ENCODE measurements at regions of chr13 and their contacts with region 1.

Region 1: DNA sequence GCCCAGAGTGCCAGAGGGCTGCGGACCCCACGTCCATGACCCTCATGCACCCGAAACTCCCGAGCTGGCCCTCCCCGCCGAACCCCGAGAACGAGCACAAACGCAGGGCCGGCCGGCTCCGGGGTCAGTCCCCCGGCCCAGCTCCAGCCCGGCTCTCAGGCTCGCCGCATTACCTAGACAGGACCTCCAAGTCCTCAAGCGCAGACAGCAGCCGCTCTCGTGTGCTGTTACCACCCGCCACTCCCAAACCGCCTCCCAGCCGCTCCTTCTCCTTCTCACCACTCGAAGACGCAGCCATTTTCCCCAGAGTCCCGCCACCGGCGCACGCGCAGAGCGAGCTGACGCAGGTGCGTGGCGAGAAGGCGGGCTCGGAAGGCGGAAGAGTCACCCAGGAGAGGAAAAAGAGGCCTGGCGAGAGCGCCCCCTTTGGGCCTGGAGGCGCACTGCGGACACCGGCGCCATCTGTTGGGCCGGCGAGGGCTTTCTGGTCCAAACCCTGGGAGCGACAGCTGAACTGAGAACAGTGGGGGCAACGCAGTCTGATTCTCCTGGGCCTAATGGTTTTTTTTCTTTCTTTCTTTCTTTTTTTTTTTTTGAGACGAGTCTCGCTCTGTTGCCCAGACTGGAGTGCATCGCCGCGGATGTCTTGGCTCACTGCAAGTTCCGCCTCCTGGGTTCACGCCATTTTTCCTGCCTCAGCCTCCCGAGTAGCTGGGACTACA is at the start of gene MED4:
- DNase-seq: peak; percentile 94
- H3K4me3 Mint-ChIP-seq: peak within 1 kb of the TSS; percentile 83
- H3K27ac Mint-ChIP-seq: peak within 1 kb of the TSS; percentile 96
- H3K4me1 Mint-ChIP-seq: peaks cover 13% of the 10 kb centered on the region
- H3K27me3 Mint-ChIP-seq: no peaks in the 10 kb centered on the region
- CTCF ChIP-seq: peak; percentile 99
- total RNA-seq, gene MED4: 45.2 and 56.5 TPM in 2 replicates

Region 2: DNA sequence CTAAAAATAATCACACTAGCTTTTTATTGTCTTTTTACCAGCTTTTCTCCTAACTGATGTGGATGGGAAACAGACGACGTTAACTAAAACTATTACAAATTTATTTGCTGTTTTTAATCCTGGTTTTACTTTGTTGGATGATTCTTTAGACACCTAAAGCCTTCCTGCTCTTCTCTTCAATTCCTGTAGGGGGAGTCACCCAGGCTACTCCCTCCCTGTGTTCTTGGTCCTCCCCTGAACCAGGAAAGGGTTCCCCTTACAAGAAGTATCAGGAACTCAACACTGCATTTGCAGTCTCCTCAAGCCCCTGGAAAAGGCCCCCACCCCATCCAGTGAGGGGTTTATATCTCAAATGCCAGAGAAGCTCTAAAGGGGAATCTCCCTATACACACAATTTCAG is 300.0 kb before region 1 on chr13:
- CTCF ChIA-PET with region 1: interaction called, 7 read pairs
- POLR2A ChIA-PET with region 1: interaction called, 3 read pairs
- intact Hi-C with region 1: loop called (anchors 2 kb)
- DNase-seq: peak; percentile 42
- H3K4me3 Mint-ChIP-seq: no peak overlapping the region
- H3K27ac Mint-ChIP-seq: no peak overlapping the region
- H3K4me1 Mint-ChIP-seq: no peaks in the 10 kb centered on the region
- H3K27me3 Mint-ChIP-seq: no peaks in the 10 kb centered on the region
- CTCF ChIP-seq: peak; percentile 38

Region 3: GRCh38 chr13:48110931-48111721 is 16.2 kb after region 1 on chr13:
- CTCF ChIA-PET with region 1: interaction called, 13 read pairs
- POLR2A ChIA-PET with region 1: no interaction called
- intact Hi-C with region 1: no loop called
- DNase-seq: no peak
- H3K4me3 Mint-ChIP-seq: no peak overlapping the region
- H3K27ac Mint-ChIP-seq: no peak overlapping the region
- H3K4me1 Mint-ChIP-seq: peaks cover 10% of the 10 kb centered on the region
- H3K27me3 Mint-ChIP-seq: no peaks in the 10 kb centered on the region
- CTCF ChIP-seq: no peak

Region 4: DNA sequence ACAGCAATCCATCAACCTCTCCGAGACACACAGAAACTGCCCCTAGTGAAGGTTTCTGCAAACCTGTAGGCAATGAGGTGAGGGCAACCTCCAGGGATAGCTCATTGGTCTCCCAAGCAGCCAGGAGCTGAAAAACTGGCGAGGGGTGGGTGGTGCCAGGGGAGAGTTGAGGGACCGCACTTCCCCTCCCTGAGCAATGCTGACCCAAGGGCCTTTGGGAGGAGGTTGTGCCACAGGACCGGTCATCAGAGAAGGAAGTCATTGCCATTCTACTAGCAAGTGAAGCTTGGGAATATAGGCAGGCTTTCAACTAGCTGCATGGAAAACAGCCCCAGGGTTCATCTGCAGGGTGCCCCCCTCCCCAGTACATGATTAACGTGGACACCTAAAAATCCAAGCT is 23.1 kb after region 1 on chr13:
- CTCF ChIA-PET with region 1: interaction called, 10 read pairs
- POLR2A ChIA-PET with region 1: no interaction called
- intact Hi-C with region 1: no loop called
- DNase-seq: no peak
- H3K4me3 Mint-ChIP-seq: no peak overlapping the region
- H3K27ac Mint-ChIP-seq: no peak overlapping the region
- H3K4me1 Mint-ChIP-seq: peaks cover 10% of the 10 kb centered on the region
- H3K27me3 Mint-ChIP-seq: no peaks in the 10 kb centered on the region
- CTCF ChIP-seq: no peak

Region 5: GRCh38 chr13:48199499-48199898 is 104.6 kb after region 1 on chr13:
- CTCF ChIA-PET with region 1: no interaction called
- POLR2A ChIA-PET with region 1: no interaction called
- intact Hi-C with region 1: no loop called
- DNase-seq: no peak
- H3K4me3 Mint-ChIP-seq: no peak overlapping the region
- H3K27ac Mint-ChIP-seq: no peak overlapping the region
- H3K4me1 Mint-ChIP-seq: no peaks in the 10 kb centered on the region
- H3K27me3 Mint-ChIP-seq: no peaks in the 10 kb centered on the region
- CTCF ChIP-seq: no peak

Region 6: GRCh38 chr13:48303359-48304142 is 208.6 kb after region 1 on chr13 and contains the start of gene RB1:
- CTCF ChIA-PET with region 1: interaction called, 3 read pairs
- POLR2A ChIA-PET with region 1: interaction called, 13 read pairs
- intact Hi-C with region 1: no loop called
- DNase-seq: peak; percentile 92
- H3K4me3 Mint-ChIP-seq: peak within 1 kb of the TSS; percentile 86
- H3K27ac Mint-ChIP-seq: peak within 1 kb of the TSS; percentile 97
- H3K4me1 Mint-ChIP-seq: peaks cover 16% of the 10 kb centered on the region
- H3K27me3 Mint-ChIP-seq: no peaks in the 10 kb centered on the region
- CTCF ChIP-seq: no peak
- total RNA-seq, gene RB1: 40.7 and 43.4 TPM in 2 replicates